Activated CD8-positive, alpha-beta T cell treated with anti-CD3 and anti-CD28 coated beads, Interleukin-2, amount 10 ng/mL, durations not matched to agents 7 days and 5 days (primary cell): ENCODE measurements at regions of chr12 and their contacts with region 1.

Region 1: DNA sequence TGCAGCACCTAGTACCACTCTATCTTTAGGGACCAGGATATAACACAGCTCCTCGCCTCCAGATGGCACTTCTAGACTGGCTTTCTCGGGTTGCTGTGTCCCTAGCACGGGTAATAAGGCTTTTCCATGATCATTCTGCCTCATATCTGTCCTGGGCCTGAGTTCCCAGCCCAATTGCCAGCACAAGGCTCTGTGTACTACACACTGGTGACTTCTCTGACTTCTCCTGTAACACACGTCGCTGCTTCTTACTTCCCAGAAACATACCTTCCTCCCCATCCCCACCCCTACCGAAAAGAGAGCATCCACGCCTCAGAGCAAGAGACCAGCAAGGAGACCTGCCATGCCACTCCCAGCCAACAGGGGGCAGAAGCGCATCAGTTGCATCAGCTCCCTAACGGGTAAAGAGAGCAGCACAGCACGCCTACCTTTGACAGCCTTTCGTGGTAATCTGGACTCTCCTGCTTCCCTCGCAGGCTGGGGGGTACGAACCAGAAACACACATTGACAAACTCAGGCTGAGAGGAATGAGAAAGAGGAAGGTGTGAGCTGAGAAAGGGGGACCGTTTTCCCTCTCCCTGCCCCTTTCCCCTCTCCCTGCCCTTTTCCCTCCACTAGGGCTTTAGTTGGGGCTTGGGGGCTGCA is 21.2 kb upstream of the ZNF740 start:
- DNase-seq: peak; percentile 95
- ATAC-seq: peak; percentile 99
- H3K4me3 Mint-ChIP-seq: no peak overlapping the region
- H3K27ac Mint-ChIP-seq: peak overlapping the region; percentile 81
- H3K4me1 Mint-ChIP-seq: peaks cover 18% of the 10 kb centered on the region
- H3K27me3 Mint-ChIP-seq: no peaks in the 10 kb centered on the region

Region 2: GRCh38 chr12:53065975-53066931 is 93.1 kb before region 1 on chr12:
- CTCF ChIA-PET with region 1: interaction called, 26 read pairs
- POLR2A ChIA-PET with region 1: no interaction called
- DNase-seq: peak; percentile 79
- ATAC-seq: peak; percentile 79
- H3K4me3 Mint-ChIP-seq: no peak overlapping the region
- H3K27ac Mint-ChIP-seq: peak overlapping the region; percentile 69
- H3K4me1 Mint-ChIP-seq: peaks cover 7% of the 10 kb centered on the region
- H3K27me3 Mint-ChIP-seq: no peaks in the 10 kb centered on the region

Region 3: DNA sequence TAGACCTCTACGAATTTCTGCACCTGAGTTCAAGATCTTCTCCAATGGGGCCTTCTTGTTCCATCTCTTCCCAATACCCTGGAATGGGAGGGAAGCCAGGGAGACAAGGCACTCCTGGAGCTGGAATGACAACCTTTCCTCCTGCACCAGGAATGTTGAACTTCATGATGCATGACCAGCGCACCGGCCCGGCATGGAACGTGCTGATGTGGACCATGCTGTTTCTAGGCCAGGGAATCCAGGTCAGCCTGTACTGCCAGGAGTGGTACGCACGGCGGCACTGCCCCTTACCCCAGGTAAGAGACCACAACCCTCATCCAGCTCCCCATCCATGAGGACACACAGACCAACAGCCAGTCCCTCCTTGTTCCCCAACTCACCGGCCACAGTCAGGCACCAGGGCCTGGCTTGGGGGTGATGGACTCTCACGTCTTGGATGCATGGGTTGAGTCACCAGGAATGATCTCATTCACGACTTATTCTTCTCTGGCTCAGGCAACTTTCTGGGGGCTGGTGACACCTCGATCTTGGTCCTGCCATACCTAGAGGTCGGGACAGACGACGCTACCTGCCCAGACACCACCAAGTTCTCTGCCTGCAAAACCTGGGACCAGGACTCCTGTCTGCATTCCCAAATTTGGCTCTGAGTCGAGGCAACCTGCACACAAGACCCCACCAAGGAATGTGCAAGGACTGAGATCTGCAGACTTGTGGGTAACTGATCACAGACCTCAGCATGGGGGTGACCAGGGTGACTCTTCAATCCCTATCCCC is 35.6 kb before region 1 on chr12:
- CTCF ChIA-PET with region 1: no interaction called
- POLR2A ChIA-PET with region 1: no interaction called
- DNase-seq: no peak
- ATAC-seq: no peak
- H3K4me3 Mint-ChIP-seq: no peak overlapping the region
- H3K27ac Mint-ChIP-seq: no peak overlapping the region
- H3K4me1 Mint-ChIP-seq: peaks cover 3% of the 10 kb centered on the region
- H3K27me3 Mint-ChIP-seq: peaks cover 3% of the 10 kb centered on the region

Region 4: DNA sequence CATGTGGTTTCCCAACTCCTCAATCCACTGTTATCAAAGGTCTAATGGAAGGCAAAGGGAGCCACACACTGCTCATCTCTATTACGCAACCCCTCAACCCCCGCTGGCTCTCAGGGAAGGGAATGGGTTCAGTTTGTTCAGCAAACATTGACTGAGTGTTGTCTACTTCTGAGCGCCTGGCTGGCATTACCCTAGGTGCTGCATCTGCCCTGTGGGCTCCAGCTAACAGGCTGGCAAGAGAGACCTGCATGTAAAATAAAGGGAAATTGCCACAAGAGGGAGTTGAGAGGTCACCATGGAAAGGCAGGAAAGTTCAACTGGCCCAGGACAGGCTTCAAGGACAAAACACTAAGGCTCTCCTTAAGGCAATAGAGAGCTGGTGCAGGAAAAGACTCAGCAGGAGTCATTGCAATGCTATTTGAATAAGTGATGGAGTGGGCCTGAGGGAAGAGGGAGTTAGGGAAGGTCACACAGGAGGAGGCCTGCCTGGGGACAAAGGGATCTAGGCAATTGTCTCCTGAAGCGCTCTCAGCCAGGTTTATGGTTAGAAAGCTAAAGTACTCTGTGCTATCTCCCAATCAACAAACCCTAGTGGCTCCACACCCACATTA is 15.7 kb after region 1 on chr12:
- CTCF ChIA-PET with region 1: interaction called, 24 read pairs
- POLR2A ChIA-PET with region 1: interaction called, 8 read pairs
- DNase-seq: no peak
- ATAC-seq: no peak
- H3K4me3 Mint-ChIP-seq: no peak overlapping the region
- H3K27ac Mint-ChIP-seq: no peak overlapping the region
- H3K4me1 Mint-ChIP-seq: peaks cover 13% of the 10 kb centered on the region
- H3K27me3 Mint-ChIP-seq: no peaks in the 10 kb centered on the region

Region 5: GRCh38 chr12:53200458-53201176 is 41.3 kb after region 1 on chr12:
- CTCF ChIA-PET with region 1: interaction called, 58 read pairs
- POLR2A ChIA-PET with region 1: interaction called, 3 read pairs
- DNase-seq: peak; percentile 57
- ATAC-seq: peak; percentile 44
- H3K4me3 Mint-ChIP-seq: peak overlapping the region; percentile 68
- H3K27ac Mint-ChIP-seq: peak overlapping the region; percentile 88
- H3K4me1 Mint-ChIP-seq: peaks cover 79% of the 10 kb centered on the region
- H3K27me3 Mint-ChIP-seq: no peaks in the 10 kb centered on the region

Region 6: DNA sequence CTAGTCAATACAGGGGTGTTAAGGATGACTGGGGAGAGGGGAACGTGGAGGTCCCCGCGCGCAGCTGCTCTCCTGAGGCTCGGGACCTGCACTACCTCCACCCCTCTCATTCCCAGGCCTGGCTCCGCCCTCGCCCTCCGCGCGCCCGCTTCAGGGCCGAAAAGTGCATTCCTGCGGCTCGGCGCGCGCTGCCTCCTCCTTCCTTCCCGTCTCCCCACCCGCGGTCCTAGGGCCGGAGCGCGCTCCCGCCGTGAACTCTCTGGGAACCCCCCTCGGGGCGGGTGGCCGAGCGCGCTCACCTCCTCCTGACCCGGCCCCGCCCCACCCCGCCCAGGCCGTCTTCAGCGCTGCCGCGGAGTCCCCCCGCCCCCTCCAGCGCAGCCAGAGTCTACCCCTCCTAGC is 61.5 kb after region 1 on chr12:
- CTCF ChIA-PET with region 1: interaction called, 11 read pairs
- POLR2A ChIA-PET with region 1: no interaction called
- DNase-seq: peak; percentile 91
- ATAC-seq: peak; percentile 68
- H3K4me3 Mint-ChIP-seq: peak overlapping the region; percentile 97
- H3K27ac Mint-ChIP-seq: peak overlapping the region; percentile 90
- H3K4me1 Mint-ChIP-seq: peaks cover 78% of the 10 kb centered on the region
- H3K27me3 Mint-ChIP-seq: no peaks in the 10 kb centered on the region

Region 7: DNA sequence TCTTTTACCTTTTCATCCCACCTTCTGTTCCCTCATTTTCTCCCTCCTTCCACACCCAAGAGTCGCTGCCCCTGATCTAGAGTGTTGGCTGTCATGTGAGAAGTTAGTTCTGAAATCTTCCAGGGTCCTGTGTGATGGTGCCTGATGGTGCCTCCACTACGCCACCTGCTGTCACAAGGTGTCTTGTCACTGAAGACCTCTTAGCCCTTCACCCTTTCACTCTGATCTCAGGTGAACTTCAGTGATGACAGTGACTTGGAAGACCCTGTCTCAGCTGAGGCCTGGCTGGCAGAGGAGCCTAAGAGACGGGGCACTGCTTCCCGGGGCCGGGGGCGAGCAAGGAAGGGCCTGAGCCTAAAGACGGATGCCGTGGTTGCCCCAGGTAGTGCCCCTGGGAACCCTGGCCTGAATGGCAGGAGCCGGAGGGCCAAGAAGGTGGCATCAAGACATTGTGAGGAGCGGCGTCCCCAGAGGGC is 128.5 kb after region 1 on chr12:
- CTCF ChIA-PET with region 1: interaction called, 20 read pairs
- POLR2A ChIA-PET with region 1: no interaction called
- DNase-seq: peak; percentile 74
- ATAC-seq: peak; percentile 86
- H3K4me3 Mint-ChIP-seq: no peak overlapping the region
- H3K27ac Mint-ChIP-seq: peak overlapping the region; percentile 22
- H3K4me1 Mint-ChIP-seq: peaks cover 4% of the 10 kb centered on the region
- H3K27me3 Mint-ChIP-seq: no peaks in the 10 kb centered on the region